ENCODE measurements at regions of chr10 and their contacts with region 1.

Region 1: DNA sequence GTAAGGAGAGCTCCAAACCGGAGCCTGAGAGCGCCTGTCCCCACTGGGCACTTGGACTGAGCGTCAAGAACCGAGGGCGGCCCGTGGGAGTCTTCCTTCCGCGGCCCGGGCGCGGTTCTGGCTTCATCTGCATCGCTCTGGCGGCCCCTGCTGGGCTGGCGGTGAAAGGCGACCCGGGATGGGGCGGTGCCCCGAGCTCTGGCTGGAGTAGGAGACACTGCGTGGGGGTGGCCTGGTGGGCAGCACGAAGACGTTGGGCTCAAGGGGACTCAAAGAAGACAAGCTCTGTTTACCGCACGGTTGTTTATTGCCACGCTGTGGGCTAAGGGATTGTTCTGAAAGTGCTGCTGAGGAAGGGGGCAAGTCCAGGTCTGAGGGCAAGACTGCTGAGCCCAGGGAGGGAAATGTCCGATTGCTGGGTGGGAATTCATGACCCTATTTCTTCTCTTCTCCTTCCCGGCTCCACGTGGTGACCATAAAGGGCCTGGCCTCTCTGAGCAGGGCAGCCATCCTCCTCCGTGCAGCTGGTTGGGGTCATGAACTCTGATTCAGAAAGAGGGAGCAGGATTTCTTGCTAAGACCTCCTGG is 29.8 kb downstream of the PLAU start:
- DNase-seq: no peak
- H3K4me3 ChIP-seq: no peak overlapping the region
- H3K27me3 ChIP-seq: no peaks in the 10 kb centered on the region
- CTCF ChIP-seq: peak; percentile 98

Region 2: GRCh38 chr10:73798927-73799563 is 141.7 kb before region 1 on chr10:
- CTCF ChIA-PET with region 1: no interaction called
- POLR2A ChIA-PET with region 1: no interaction called
- DNase-seq: no peak
- H3K4me3 ChIP-seq: no peak overlapping the region
- H3K27me3 ChIP-seq: no peaks in the 10 kb centered on the region
- CTCF ChIP-seq: no peak

Region 3: GRCh38 chr10:73837072-73837471 is 103.7 kb before region 1 on chr10:
- CTCF ChIA-PET with region 1: no interaction called
- POLR2A ChIA-PET with region 1: no interaction called
- DNase-seq: no peak
- H3K4me3 ChIP-seq: no peak overlapping the region
- H3K27me3 ChIP-seq: no peaks in the 10 kb centered on the region
- CTCF ChIP-seq: no peak

Region 4: DNA sequence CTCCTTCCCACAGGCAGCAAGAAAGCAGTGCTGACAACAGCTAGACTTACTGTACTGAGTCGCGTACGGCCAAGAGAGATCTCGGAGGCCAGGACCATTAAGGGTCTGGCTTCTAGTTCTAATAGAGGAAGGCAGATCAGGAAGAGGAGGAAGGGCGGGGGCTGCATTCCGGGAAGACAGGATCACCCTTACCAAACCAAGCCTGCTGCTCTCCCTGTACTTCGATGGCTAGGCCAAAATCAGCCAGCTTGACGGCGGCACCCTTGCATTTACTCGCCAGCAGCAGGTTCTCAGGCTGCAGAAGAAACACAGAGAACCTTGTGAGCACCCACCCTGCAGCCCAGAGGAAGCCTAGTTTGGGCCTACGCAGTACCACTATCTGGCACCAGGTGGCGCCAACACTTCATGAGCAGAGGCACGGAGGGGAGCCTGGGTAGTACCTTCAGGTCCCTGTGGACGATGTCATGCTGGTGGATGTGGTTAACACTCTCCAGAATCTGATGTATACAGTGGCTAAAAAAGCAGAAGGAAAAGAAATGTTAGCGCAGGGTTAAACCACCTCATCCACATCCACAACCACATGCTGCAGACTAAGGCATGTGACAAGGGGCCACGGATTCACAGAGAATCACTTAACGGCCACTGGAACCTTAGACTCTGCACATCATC is 91.8 kb before region 1 on chr10:
- CTCF ChIA-PET with region 1: interaction called, 17 read pairs
- POLR2A ChIA-PET with region 1: no interaction called
- DNase-seq: no peak
- H3K4me3 ChIP-seq: no peak overlapping the region
- H3K27me3 ChIP-seq: no peaks in the 10 kb centered on the region
- CTCF ChIP-seq: peak; percentile 99

Region 5: GRCh38 chr10:73879296-73880173 is 61.2 kb before region 1 on chr10:
- CTCF ChIA-PET with region 1: interaction called, 484 read pairs
- POLR2A ChIA-PET with region 1: no interaction called
- DNase-seq: no peak
- H3K4me3 ChIP-seq: no peak overlapping the region
- H3K27me3 ChIP-seq: no peaks in the 10 kb centered on the region
- CTCF ChIP-seq: peak; percentile 93

Region 6: DNA sequence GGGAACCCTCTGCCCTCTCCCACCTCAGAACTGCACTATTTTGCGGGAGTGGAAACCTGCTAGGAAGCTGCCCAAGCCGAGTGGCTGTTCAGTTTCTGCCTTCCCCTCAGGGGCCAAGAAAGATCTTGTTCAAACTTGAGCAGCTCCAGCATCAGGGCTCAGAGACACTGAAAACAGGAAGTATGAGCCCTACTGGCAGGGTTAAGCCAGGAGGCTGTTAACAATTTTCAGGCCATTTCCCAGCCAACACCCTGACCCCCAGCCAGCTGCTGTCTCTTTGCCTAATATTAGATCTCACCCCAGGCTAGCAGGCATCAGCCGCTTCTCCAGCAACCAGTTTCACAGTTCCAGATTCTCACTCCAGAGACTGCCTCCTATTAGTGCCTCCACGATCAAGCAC is 20.6 kb before region 1 on chr10:
- CTCF ChIA-PET with region 1: interaction called, 18 read pairs
- POLR2A ChIA-PET with region 1: no interaction called
- DNase-seq: no peak
- H3K4me3 ChIP-seq: no peak overlapping the region
- H3K27me3 ChIP-seq: no peaks in the 10 kb centered on the region
- CTCF ChIP-seq: peak; percentile 13; the same call in 1 of the 2 replicates

Region 7: GRCh38 chr10:73983096-73984047 is 42.6 kb after region 1 on chr10:
- CTCF ChIA-PET with region 1: no interaction called
- POLR2A ChIA-PET with region 1: no interaction called
- DNase-seq: no peak
- H3K4me3 ChIP-seq: no peak overlapping the region
- H3K27me3 ChIP-seq: no peaks in the 10 kb centered on the region
- CTCF ChIP-seq: no peak

Region 8: DNA sequence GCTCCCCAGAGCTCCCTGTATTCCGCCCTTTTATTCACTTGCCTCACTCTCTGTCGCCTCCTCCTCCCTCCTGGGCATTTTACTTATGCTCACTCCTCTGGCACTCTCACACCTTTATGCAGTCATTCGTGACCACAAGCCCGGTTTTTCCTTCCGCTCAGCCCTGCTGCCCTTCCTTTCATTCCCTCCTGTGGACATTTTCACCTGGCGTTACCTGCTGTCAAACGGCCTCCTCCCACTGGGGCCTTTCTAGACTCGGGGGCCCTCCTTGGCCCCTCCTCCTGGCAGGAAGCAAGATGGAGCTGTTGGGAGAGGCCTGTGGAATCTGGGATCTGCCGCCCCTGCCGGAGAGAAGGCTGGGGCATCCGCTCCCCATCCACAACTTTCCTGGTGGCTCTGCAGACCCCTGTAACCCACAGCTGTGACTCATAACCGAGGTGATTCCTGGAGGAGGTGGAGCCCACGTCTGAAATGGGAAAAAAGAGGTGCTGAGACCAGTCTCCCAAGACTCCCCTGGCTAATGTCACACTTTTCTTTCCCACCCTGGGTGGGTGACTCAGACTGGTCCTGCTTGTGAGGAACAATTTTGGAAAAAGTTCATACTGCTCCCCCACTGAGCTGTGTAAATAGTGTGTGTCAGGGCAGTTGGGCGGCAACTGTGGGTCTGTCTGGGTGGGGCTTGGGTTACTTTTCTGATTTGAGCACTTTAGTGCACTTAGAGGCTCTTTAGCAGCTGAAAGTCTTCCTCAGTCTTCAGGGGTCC is 58.4 kb after region 1 on chr10:
- CTCF ChIA-PET with region 1: interaction called, 12 read pairs
- POLR2A ChIA-PET with region 1: no interaction called
- DNase-seq: peak; percentile 47
- H3K4me3 ChIP-seq: peak overlapping the region; percentile 95
- H3K27me3 ChIP-seq: no peaks in the 10 kb centered on the region
- CTCF ChIP-seq: peak; percentile 77

Region 9: GRCh38 chr10:74103560-74104248 is 163.0 kb after region 1 on chr10:
- CTCF ChIA-PET with region 1: interaction called, 17 read pairs
- POLR2A ChIA-PET with region 1: no interaction called
- DNase-seq: no peak
- H3K4me3 ChIP-seq: no peak overlapping the region
- H3K27me3 ChIP-seq: no peaks in the 10 kb centered on the region
- CTCF ChIP-seq: peak; percentile 51